Psoas muscle (tissue), 8 donors: ENCODE measurements at regions of chr6 and their contacts with region 1.

Region 1: DNA sequence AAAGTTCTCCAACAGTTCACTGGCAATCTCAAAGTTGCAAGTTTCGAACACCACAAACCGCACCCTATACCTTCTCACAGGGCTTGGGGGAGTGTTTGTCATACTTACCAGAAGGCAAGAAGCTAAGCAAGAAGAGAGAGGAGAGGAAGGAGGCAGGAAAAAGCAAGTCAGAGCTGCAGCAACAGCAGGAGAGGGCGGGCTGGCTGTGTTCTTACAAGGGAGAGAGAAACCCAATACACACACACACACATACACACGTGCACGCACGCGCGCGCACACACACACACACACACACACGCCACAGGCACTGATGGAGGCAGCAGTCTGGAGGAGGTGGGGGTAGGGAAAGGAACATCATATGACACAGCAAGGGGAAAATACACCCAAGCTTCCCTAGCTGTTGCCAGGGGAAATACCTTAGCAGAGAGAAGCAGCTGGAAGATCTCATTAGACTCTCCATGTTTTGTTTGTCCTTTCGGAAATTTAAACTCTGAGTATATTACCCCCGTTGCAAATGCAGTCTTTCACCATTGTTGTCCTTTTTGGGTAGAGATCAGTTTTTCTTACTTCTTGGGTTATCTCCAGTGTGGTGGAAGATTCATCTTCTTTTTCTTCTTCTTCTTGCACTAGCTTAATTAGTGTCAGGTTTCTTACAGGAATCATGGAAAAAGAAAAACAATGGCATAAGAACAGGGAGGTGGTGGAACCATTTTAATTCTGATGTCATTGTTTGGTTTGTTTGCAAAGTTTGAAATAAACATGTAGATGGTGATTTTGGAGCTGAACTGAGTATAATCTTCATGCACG is at the start of gene TXLNB:
- DNase-seq: peak; percentile 78 to 94
- ATAC-seq: peak; percentile 86 to 88 (median 88)
- H3K4me3 ChIP-seq: peak within 1 kb of the TSS; percentile 68
- H3K27ac ChIP-seq: peak within 1 kb of the TSS; percentile 98
- H3K4me1 ChIP-seq: peaks cover 21% of the 10 kb centered on the region
- H3K27me3 ChIP-seq: no peaks in the 10 kb centered on the region
- CTCF ChIP-seq: no peak
- total RNA-seq, gene TXLNB: 128 to 230 (median 158) TPM

Region 2: DNA sequence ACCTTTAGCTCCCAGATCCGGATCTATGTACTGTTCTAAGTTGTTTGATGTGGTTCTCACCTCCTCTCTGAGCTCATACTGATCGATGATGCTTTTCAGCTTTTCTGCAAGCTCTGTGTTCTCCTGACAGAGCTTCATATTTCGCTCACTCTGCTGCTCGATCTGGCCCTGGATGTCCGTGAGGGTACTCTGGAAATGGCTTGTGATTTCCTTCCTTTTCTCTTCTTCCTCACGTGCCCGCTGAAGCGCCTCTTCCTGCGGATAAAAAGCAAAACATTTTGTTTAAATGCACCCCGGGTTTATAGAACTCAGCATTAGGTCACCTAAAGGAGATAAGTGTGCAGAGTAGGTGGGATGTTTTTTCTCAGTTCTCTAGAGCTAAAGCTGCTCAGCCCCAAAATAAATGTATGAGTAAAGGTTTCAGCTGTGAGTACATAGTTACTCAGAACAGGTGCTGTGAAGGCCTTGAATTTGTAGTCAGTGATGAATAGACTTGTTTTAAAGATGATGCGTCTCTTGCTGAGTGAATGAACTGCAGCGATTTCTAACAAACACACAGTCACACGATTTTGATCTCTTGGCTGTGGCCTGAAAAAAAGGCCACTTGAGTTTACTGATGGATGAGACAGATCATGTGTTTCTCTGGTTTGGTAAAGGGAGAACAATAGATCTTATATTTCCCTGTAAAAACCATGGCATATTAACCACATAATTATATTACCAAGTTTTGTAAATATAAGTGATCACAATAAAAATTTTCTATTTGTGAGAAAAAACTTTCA is 29.3 kb before region 1 on chr6:
- intact Hi-C with region 1: loop called in 1 of 2 experiments (anchors 1 kb)
- DNase-seq: no peak
- ATAC-seq: peak; percentile 93 to 98 (median 98)
- H3K4me3 ChIP-seq: no peak overlapping the region
- H3K27ac ChIP-seq: peak overlapping the region; percentile 93
- H3K4me1 ChIP-seq: peaks cover 35% of the 10 kb centered on the region
- H3K27me3 ChIP-seq: no peaks in the 10 kb centered on the region
- CTCF ChIP-seq: no peak

Region 3: DNA sequence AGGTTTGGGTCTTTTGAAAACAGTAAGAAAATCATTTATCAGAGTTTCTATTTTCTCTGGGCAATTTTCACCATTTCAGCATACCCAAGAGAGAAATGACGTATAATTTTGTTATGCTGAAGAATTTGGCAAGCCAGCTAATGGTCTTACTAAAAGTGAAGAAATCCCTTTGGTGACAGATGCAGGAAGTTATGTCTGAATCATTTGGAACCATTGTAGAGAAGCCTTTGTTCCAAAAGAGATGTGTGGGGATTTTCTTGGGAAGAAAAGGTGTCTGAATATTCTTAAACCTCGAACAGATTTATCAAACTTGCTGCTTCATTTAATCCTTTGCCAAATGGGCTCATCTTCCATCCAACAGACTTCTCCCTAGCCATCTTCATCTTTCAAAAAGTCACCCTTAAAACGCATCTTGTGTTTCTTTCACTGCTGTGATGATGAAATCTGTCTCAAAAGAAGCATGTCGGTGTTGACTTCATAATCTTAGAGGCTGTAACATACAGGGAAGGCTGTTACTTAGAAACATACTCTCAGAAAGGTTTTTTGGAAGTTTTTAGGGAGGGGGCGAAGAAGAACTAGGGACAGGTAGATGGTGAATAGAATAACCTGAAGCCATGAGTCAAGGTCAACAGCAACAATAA is 42.9 kb after region 1 on chr6:
- intact Hi-C with region 1: loop called (anchors 2 to 5 kb)
- DNase-seq: no peak
- ATAC-seq: peak; percentile 27 to 69 (median 66)
- H3K4me3 ChIP-seq: no peak overlapping the region
- H3K27ac ChIP-seq: peak overlapping the region; percentile 77
- H3K4me1 ChIP-seq: peaks cover 48% of the 10 kb centered on the region
- H3K27me3 ChIP-seq: no peaks in the 10 kb centered on the region
- CTCF ChIP-seq: no peak

Region 4: GRCh38 chr6:139473231-139473701 is 181.2 kb after region 1 on chr6:
- intact Hi-C with region 1: no loop called
- DNase-seq: peak in 1 of 2 donors; percentile 17
- ATAC-seq: peak; percentile 77 to 93 (median 86)
- H3K4me3 ChIP-seq: peak overlapping the region; percentile 45
- H3K27ac ChIP-seq: peak overlapping the region; percentile 71
- H3K4me1 ChIP-seq: peaks cover 23% of the 10 kb centered on the region
- H3K27me3 ChIP-seq: no peaks in the 10 kb centered on the region
- CTCF ChIP-seq: no peak